BJ (cell line): ENCODE measurements at regions of chr10 and their contacts with region 1.

Region 1: DNA sequence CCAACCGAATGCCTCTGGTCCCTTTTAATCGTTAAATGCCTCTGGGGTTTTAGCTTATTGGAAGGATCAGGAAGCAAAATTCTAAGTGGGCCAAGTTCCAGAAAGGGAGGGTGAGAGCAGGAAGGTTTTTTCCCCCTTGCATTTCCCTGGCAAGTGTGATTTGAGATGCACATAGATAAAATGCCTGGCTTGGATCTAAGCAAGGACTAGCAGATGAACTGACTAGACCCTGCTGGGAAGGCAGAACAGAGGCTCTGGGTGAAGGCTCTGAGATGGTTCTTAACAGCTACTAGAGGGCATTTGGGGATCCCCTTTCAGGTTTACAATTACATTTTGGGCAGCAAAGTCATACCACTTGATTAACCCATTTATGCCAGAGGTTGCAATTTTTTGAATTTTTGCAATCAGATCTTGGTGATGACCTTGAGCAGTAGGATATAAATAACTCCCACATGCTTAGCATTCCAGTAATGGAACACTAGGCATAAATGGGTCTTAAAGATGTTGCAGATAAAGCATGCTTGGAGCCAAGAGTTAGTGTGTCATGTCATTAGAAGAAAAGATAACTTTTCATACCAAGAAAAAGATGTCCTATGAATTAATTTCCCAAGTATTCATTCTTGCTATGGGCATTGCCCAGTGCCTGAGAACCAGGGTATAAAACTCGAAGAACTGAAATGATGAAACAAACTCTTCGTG is 205.9 kb downstream of the SEC23IP start:
- DNase-seq: peak; percentile 12
- H3K4me3 ChIP-seq: no peak overlapping the region
- H3K27me3 ChIP-seq: no peaks in the 10 kb centered on the region
- CTCF ChIP-seq: no peak

Region 2: DNA sequence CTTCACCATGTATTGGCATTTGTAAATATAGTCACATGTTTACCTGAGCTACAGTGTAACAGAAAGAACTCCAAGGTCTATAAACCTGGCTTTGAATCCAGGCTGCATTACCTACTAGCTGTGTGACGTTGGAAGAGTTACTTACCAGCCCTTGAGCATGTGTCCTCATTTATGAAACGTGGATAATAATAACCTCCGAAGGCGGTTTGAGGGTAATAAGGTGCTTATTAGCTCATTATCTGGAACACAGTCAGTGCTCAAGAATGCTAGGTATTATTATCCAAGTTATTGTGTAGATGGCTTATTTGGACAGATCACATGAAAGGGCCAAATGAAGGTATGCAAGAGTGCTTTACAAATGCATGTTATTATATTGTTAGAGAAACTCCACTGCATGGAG is 140.9 kb before region 1 on chr10:
- CTCF ChIA-PET with region 1: no interaction called
- POLR2A ChIA-PET with region 1: interaction called, 23 read pairs
- DNase-seq: no peak
- H3K4me3 ChIP-seq: no peak overlapping the region
- H3K27me3 ChIP-seq: no peaks in the 10 kb centered on the region
- CTCF ChIP-seq: no peak